Gastrocnemius medialis (tissue), 4 donors: ENCODE measurements at regions of chr20 and their contacts with region 1.

Region 1: GRCh38 chr20:50929299-50930138 is 1.7 kb downstream of the ADNP start:
- DNase-seq: peak; percentile 67 to 89
- ATAC-seq: peak; percentile 27 to 66
- H3K4me3 ChIP-seq: peak overlapping the region; percentile 66 to 87 (median 78)
- H3K27ac ChIP-seq: peak overlapping the region; percentile 76 to 98 (median 80)
- H3K4me1 ChIP-seq: peaks cover 39 to 48% of the 10 kb centered on the region in 2 donors
- H3K27me3 ChIP-seq: no peaks in the 10 kb centered on the region
- CTCF ChIP-seq: peak; percentile 58 to 86 (median 67)
- POLR2A ChIP-seq: no peak

Region 2: GRCh38 chr20:49936153-49937027 is 993.1 kb before region 1 on chr20 and contains the start of gene RNF114:
- in situ Hi-C with region 1: no loop called
- intact Hi-C with region 1: loop called (anchors 10 kb)
- DNase-seq: peak; percentile 88 to 89
- ATAC-seq: peak; percentile 84 to 87
- H3K4me3 ChIP-seq: peak within 1 kb of the TSS; percentile 88 to 99 (median 96)
- H3K27ac ChIP-seq: peak within 1 kb of the TSS; percentile 95 to 100 (median 98)
- H3K4me1 ChIP-seq: peaks cover 44 to 45% of the 10 kb centered on the region in 2 donors
- H3K27me3 ChIP-seq: no peaks in the 10 kb centered on the region
- CTCF ChIP-seq: peak in 2 of 5 experiments; percentile 16 to 21
- POLR2A ChIP-seq: peak; percentile 98 to 99
- total RNA-seq, gene RNF114: 133 to 216 (median 172) TPM

Region 3: DNA sequence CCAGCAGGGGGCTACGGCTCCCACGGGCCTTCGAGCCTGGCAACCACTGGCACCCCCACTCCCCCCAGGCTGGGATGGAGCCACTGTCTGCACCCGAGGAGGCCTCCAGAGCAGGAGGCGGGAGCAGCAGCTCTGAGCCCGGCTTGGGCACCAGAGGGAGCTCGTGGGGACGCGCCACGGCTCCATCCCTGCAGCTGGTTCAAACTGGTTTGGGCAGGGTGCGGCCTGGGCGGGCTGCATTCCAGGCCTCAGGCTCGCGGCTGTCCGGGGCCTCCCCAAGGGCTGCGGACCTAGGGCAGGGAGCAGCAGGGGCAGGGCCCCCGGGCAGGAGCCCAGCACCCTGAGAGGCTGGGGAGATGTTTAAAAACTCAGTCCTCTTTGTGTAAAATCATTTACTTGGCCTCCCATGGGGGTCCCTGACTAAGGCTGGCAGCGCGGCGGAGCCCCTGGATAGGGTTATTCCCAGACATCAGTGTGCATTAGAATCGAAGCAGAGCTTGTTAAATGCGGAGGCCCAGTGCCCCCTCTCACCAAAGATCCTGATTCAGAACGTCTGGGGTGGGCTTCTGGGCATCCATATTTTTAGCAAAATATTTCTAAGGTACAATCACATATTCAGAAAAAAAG is 138.8 kb before region 1 on chr20:
- in situ Hi-C with region 1: loop called (anchors 10 kb)
- intact Hi-C with region 1: loop called (anchors 1 kb)
- DNase-seq: peak; percentile 40 to 57
- ATAC-seq: peak in 1 of 2 donors; percentile 45
- H3K4me3 ChIP-seq: peak overlapping the region; percentile 7 to 34 (median 24)
- H3K27ac ChIP-seq: peak overlapping the region; percentile 27 to 60 (median 50)
- H3K4me1 ChIP-seq: peaks cover 10 to 17% of the 10 kb centered on the region in 2 donors
- H3K27me3 ChIP-seq: no peaks in the 10 kb centered on the region
- CTCF ChIP-seq: peak; percentile 9 to 64 (median 49)
- POLR2A ChIP-seq: no peak

Region 4: DNA sequence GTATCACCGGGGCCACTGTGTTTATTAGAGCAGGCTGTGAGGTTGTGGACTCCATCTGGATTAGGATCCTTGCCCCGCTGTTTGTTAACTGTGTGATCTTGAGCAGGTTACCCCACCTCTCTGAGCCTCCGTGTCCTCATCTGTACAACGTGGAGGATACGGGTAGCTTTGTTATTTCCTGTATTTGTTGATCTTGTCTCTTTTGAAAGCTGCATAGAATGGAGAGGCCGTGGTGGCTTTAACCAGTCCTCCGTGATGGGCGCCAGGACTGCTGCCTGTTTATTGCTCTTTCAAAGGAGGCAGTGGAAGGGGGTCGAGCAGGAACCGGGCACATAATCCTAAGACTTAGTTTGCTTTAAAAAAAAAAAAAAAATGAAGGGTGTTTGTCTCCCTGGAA is 111.7 kb before region 1 on chr20:
- in situ Hi-C with region 1: no loop called
- intact Hi-C with region 1: loop called (anchors 1 kb)
- DNase-seq: no peak
- ATAC-seq: no peak
- H3K4me3 ChIP-seq: no peak overlapping the region
- H3K27ac ChIP-seq: no peak overlapping the region
- H3K4me1 ChIP-seq: no peaks in the 10 kb centered on the region
- H3K27me3 ChIP-seq: no peaks in the 10 kb centered on the region
- CTCF ChIP-seq: no peak
- POLR2A ChIP-seq: no peak

Region 5: GRCh38 chr20:50958615-50959542 is 29.4 kb after region 1 on chr20 and contains the start of gene MOCS3:
- in situ Hi-C with region 1: no loop called
- intact Hi-C with region 1: loop called (anchors 1 kb)
- DNase-seq: peak; percentile 75 to 86
- ATAC-seq: peak; percentile 88 to 92
- H3K4me3 ChIP-seq: peak within 1 kb of the TSS; percentile 77 to 99 (median 90)
- H3K27ac ChIP-seq: peak within 1 kb of the TSS; percentile 88 to 98 (median 92)
- H3K4me1 ChIP-seq: peaks cover 46 to 54% of the 10 kb centered on the region in 2 donors
- H3K27me3 ChIP-seq: no peaks in the 10 kb centered on the region
- CTCF ChIP-seq: no peak
- POLR2A ChIP-seq: peak; percentile 26 to 39
- total RNA-seq, gene MOCS3: 3.1 to 5.7 (median 4.7) TPM